Mammary epithelial cell (primary cell): ENCODE measurements at regions of chr6 and their contacts with region 1.

Region 1: DNA sequence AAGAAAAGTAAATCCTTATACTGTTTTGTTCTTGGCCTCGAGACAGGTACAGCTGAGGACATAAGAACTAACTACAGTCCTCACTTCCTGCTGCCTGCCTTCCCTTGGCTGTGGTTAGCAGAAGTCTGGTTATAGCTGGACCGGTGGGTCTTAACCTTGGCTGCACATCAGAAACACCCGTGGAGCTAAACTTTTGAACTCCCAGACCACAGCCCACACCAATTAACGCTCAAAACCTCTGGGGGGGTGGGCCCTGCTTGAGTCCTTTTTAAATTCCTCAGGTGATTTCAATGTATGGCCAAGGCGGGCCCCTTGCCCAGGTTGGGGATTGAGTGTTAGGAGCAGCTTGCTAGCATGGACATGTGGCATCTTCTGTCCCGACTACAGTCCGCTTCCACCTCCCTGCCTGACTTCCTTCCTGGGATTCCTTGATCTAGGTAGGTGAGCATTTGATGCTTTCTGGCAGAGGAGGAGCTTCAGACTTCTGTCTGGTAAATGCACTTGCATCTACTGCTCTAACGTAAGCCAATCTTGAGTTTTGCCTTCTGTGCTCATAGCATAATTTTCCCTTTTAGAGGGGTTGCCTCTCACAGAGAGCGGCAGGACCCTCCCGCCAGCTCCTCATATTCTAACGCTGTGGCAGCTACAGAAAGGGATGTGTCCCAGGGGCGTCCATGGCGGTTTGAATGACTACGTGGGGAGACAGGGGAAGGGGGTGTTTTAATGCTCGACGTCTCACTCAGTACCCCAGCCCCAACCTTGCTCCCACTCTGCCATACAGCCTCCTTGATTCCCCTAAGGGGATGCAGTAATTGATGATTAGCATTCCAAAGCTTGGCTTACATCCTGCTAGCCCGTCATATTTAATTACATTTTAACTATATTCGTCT is 390.1 kb downstream of the ZFAND3 start:
- DNase-seq: no peak
- H3K4me3 ChIP-seq: no peak overlapping the region
- H3K27ac ChIP-seq: no peak overlapping the region
- H3K4me1 ChIP-seq: no peaks in the 10 kb centered on the region
- H3K27me3 ChIP-seq: no peaks in the 10 kb centered on the region
- CTCF ChIP-seq: no peak

Region 2: GRCh38 chr6:38034274-38034914 is 175.2 kb before region 1 on chr6:
- CTCF ChIA-PET with region 1: no interaction called
- dilution Hi-C with region 1: no loop called
- in situ Hi-C with region 1: no loop called
- intact Hi-C with region 1: no loop called
- DNase-seq: no peak
- H3K4me3 ChIP-seq: no peak overlapping the region
- H3K27ac ChIP-seq: no peak overlapping the region
- H3K4me1 ChIP-seq: peaks cover 4% of the 10 kb centered on the region
- H3K27me3 ChIP-seq: no peaks in the 10 kb centered on the region
- CTCF ChIP-seq: peak; percentile 53 to 63

Region 3: GRCh38 chr6:38564301-38564700 is 354.7 kb after region 1 on chr6:
- CTCF ChIA-PET with region 1: no interaction called
- dilution Hi-C with region 1: no loop called
- in situ Hi-C with region 1: no loop called
- intact Hi-C with region 1: loop called (anchors 5 kb)
- DNase-seq: no peak
- H3K4me3 ChIP-seq: no peak overlapping the region
- H3K27ac ChIP-seq: no peak overlapping the region
- H3K4me1 ChIP-seq: no peaks in the 10 kb centered on the region
- H3K27me3 ChIP-seq: no peaks in the 10 kb centered on the region
- CTCF ChIP-seq: no peak